Posterior vena cava (tissue), 2 donors: ENCODE measurements at regions of chr6 and their contacts with region 1.

Region 1: DNA sequence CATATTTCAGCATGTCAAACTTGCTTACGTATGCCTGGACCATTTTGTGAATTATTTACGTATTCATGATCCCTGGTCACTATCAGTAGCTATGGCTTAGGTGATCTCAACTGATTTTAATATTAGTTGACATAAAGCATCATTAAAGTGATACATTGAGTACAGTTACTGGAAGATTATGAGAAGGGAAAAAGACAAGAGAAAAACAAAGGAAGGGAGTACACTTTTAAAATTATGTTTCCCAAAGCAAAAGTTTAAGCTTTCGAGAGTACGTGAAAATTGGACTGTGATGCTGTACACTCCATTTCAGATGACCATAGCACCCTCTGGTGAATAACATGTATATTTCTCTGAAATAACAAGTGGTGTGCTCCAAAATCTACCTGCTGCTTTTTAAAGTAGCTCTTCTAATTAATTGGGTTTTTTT is 215.0 kb upstream of the HSF2 start:
- DNase-seq: no peak

Region 2: DNA sequence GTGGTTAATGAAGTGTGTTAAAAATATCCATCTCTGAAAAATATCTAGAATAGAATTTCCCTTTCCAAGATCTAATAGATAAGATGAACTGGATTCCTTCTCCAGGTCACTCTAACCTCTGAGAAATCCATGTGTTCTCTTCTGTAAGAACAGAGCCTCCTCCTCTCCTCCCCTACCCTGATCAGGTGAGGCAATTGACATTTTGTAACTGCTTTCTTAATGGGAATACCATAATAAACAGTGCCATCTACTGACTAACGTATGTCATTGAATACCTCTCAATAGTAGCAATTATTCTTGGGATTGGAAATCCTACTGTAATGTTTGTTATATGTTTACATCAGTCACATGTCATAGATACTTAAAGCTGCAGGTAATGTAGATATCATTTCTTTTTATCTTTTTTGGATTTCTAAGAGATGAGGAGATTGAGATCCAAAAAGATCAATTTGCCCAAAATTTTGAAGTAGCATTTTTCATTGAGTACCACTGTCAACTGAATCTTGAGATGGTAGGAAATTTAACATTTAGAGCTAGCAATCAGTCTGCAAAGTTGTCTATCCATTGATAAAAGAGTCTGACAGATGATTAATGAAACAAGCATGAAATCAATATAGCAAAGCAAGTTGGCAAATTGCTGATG is 150.8 kb before region 1 on chr6:
- intact Hi-C with region 1: loop called in 1 of 2 experiments (anchors 10 kb)
- DNase-seq: no peak

Region 3: DNA sequence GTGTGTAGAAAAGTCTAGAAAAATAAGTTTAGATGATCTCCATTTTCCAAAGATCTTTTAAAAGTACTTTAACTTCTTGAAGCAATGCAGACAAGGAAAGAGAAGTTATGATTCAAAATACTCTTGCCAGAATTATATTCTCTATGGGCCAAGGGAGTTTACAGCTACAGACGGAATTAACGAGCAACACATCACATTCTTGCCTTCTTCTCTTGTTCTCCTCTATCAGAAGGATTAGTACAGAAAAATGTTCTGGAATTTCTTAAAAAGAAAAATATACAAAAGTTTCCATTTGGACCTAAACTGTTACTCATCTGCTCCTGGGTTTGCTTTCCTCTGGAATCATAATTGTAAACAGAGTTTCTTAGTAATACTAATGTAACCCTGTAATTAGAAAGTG is 69.7 kb before region 1 on chr6:
- intact Hi-C with region 1: no loop called
- DNase-seq: no peak